GM12878 (cell line): ENCODE measurements at regions of chr1 and their contacts with region 1.

Region 1: DNA sequence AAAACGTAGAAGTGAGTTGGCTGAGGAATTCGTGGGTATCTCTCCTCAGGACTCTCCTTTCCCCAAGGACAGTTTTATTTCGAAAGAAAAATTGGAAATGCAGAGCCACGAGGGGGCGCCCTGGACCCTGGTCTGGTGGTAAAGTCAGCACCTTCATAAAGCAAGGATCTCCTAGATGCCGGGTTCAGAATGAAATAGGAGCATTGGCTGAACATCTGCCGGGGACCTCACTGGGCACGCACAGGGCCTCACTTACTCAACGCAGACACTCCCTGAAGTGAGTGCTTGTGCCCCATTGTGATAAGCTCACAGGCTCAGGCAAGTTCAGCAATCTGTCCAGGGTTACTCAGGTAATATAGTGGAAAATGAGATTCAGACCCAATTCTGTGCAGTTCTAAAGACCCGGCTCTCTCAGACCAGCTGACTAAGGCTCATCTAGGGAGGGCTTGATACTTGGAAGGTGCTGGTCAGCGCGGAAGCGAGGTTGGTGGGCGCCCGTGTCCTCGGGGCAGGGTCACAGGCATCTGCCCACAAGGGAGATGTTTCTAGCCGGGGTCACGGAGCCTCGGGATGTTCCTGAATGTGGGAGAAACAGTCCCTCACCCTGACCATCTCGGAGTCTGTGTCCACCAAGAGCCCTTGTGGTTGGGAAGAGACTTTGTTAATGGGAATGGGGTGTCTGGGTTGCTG is 55.7 kb upstream of the ETV3 start:
- DNase-seq: no peak
- ATAC-seq: peak; percentile 60
- H3K4me3 ChIP-seq: no peak overlapping the region
- H3K27ac ChIP-seq: no peak overlapping the region
- H3K4me1 ChIP-seq: peaks cover 8% of the 10 kb centered on the region; the same call in 1 of the 2 replicates
- H3K27me3 ChIP-seq: no peaks in the 10 kb centered on the region
- CTCF ChIP-seq: peak; percentile 68 to 76 (median 75)
- EP300 ChIP-seq: no peak
- POLR2A ChIP-seq: no peak
- RAD21 ChIP-seq: peak; percentile 65

Region 2: DNA sequence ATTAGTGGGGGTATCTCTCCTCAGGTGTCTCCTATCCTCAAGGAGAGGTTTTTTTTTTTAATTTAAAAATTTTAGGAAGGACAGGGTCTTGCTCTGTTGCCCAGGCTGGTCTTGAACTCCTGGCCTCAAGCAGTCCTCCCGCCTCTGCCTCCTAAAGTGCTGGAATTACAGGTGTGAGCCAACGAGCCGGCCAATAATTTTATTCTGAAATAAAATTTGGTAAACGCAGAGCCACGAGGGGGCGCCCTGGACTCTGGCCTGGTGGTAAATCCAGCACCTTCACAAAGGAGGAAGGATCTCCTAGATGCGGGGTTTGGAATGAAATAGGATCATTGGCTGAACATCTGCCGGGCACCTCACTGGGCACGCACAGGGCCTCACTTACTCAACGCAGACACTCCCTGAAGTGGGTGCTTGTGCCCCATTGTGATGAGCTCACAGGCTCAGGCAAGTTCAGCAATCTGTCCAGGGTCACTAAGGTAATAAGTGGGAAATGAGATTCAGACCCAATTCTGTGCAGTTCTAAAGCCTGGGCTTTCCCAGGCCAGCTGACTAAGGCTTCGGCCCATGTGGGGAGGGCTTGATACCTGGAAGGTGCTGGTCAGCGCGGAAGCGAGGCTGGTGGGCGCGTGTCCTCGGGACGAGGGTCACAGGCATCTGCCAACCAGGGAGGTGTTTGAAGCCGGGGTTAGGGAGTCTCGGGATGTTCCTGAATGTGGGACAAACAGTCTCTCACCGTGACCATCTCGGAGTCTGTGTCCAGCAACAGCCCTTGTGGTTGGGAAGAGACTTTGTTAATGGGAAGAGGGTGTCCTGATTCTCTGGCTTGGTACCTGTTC is 23.0 kb before region 1 on chr1:
- CTCF ChIA-PET with region 1: interaction called, 349 read pairs
- POLR2A ChIA-PET with region 1: no interaction called
- RAD21 ChIA-PET with region 1: interaction called, 23 read pairs
- SMC1A ChIA-PET with region 1: interaction called, 21 read pairs
- in situ Hi-C with region 1: no loop called
- intact Hi-C with region 1: loop called (anchors 1 kb)
- DNase-seq: no peak
- ATAC-seq: no peak; the same call in 2 of the 3 replicates
- H3K4me3 ChIP-seq: no peak overlapping the region
- H3K27ac ChIP-seq: no peak overlapping the region
- H3K4me1 ChIP-seq: peaks cover 43% of the 10 kb centered on the region
- H3K27me3 ChIP-seq: no peaks in the 10 kb centered on the region
- CTCF ChIP-seq: peak; percentile 49 to 67 (median 59)
- EP300 ChIP-seq: no peak
- POLR2A ChIP-seq: no peak
- RAD21 ChIP-seq: peak; percentile 35

Region 3: DNA sequence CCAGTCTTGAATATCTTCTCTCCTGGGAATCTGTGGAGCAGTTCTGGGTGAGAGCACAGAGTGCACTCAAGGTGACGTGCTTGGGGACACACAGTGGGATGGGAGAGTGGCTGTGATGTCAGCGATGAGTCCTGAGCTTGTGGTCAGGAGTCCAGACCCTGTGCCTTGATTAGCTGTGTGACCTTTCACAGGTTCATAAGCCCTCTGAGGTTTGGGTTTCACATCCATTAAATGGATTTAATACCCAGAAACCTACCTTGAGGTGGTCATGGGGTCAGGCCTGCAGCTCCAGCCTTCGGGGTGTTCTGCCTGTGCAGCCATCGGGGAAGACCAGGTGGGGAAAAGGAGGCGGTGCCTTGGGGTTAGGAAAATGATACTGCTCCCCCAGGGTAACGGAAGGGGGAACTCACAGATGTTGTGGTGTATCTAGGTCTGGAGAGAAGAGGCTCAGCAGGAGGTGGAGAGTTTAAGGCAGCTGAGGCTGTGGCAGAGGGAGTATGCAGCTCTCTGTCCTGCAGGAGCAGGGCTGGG is 17.2 kb before region 1 on chr1:
- CTCF ChIA-PET with region 1: interaction called, 349 read pairs
- POLR2A ChIA-PET with region 1: interaction called, 3 read pairs
- RAD21 ChIA-PET with region 1: interaction called, 23 read pairs
- SMC1A ChIA-PET with region 1: interaction called, 21 read pairs
- in situ Hi-C with region 1: no loop called
- intact Hi-C with region 1: loop called (anchors 1 kb)
- DNase-seq: peak; percentile 71
- ATAC-seq: peak; percentile 67
- H3K4me3 ChIP-seq: no peak overlapping the region
- H3K27ac ChIP-seq: peak overlapping the region; percentile 51
- H3K4me1 ChIP-seq: peaks cover 62% of the 10 kb centered on the region
- H3K27me3 ChIP-seq: no peaks in the 10 kb centered on the region
- CTCF ChIP-seq: no peak
- EP300 ChIP-seq: peak; percentile 14 to 43; a peak in 2 of 4 replicates
- POLR2A ChIP-seq: no peak
- RAD21 ChIP-seq: no peak

Region 4: GRCh38 chr1:157181790-157182189 is 12.1 kb before region 1 on chr1:
- CTCF ChIA-PET with region 1: interaction called, 349 read pairs
- POLR2A ChIA-PET with region 1: interaction called, 3 read pairs
- RAD21 ChIA-PET with region 1: interaction called, 7 read pairs
- SMC1A ChIA-PET with region 1: interaction called, 20 read pairs
- in situ Hi-C with region 1: no loop called
- intact Hi-C with region 1: no loop called
- DNase-seq: no peak
- ATAC-seq: peak; percentile 63
- H3K4me3 ChIP-seq: peak overlapping the region; percentile 5; the same call in 1 of the 2 replicates
- H3K27ac ChIP-seq: peak overlapping the region; percentile 66
- H3K4me1 ChIP-seq: peaks cover 45% of the 10 kb centered on the region
- H3K27me3 ChIP-seq: no peaks in the 10 kb centered on the region
- CTCF ChIP-seq: no peak
- EP300 ChIP-seq: no peak
- POLR2A ChIP-seq: no peak
- RAD21 ChIP-seq: no peak

Region 5: GRCh38 chr1:157312082-157312812 is 118.4 kb after region 1 on chr1:
- CTCF ChIA-PET with region 1: interaction called, 15 read pairs
- POLR2A ChIA-PET with region 1: no interaction called
- RAD21 ChIA-PET with region 1: interaction called, 7 read pairs
- SMC1A ChIA-PET with region 1: interaction called, 10 read pairs
- in situ Hi-C with region 1: no loop called
- intact Hi-C with region 1: loop called (anchors 5 kb)
- DNase-seq: no peak
- ATAC-seq: no peak
- H3K4me3 ChIP-seq: no peak overlapping the region
- H3K27ac ChIP-seq: no peak overlapping the region
- H3K4me1 ChIP-seq: peaks cover 12% of the 10 kb centered on the region
- H3K27me3 ChIP-seq: no peaks in the 10 kb centered on the region; a peak in 2 of 4 replicates
- CTCF ChIP-seq: no peak
- EP300 ChIP-seq: no peak
- POLR2A ChIP-seq: no peak
- RAD21 ChIP-seq: no peak

Region 6: GRCh38 chr1:157357111-157357510 is 163.3 kb after region 1 on chr1:
- CTCF ChIA-PET with region 1: interaction called, 15 read pairs
- POLR2A ChIA-PET with region 1: no interaction called
- RAD21 ChIA-PET with region 1: interaction called, 3 read pairs
- SMC1A ChIA-PET with region 1: interaction called, 6 read pairs
- in situ Hi-C with region 1: no loop called
- intact Hi-C with region 1: no loop called
- DNase-seq: no peak
- ATAC-seq: no peak
- H3K4me3 ChIP-seq: no peak overlapping the region
- H3K27ac ChIP-seq: no peak overlapping the region
- H3K4me1 ChIP-seq: no peaks in the 10 kb centered on the region
- H3K27me3 ChIP-seq: no peaks in the 10 kb centered on the region
- CTCF ChIP-seq: no peak
- EP300 ChIP-seq: no peak
- POLR2A ChIP-seq: no peak
- RAD21 ChIP-seq: no peak

Region 7: DNA sequence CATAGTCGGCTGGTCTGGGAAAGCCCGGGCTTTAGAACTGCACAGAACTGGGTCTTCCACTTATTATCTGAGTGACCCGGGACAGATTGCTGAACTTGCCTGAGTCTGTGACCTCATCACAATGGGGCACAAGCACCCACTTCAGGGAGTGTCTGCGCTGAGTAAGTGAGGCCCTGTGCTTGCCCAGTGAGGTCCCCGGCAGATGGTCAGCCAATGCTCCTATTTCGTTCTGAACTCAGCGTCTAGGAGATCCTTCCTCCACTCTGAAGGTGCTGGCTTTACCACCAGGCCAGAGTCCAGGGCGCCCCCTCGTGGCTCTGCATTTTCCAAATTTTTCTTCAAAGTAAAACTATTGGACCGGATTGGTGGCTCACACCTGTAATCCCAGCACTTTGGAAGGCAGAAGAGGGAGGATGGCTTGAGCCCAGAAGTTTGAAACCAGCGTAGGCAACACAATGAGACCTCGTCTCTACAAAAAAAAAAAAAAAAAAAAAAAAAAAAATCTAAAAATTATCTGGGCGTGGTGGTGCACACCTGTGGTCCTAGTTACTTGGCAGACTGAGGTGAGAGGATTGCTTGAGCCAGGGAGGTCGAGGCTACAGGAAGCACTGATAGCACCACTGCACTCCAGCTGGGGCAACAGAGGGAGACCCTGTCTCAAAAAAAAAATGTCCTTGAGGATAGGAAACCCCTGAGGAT is 296.8 kb after region 1 on chr1:
- CTCF ChIA-PET with region 1: interaction called, 24 read pairs
- POLR2A ChIA-PET with region 1: no interaction called
- RAD21 ChIA-PET with region 1: interaction called, 7 read pairs
- SMC1A ChIA-PET with region 1: interaction called, 23 read pairs
- in situ Hi-C with region 1: loop called (anchors 5 kb)
- intact Hi-C with region 1: loop called (anchors 2 kb)
- DNase-seq: no peak
- ATAC-seq: peak; percentile 77
- H3K4me3 ChIP-seq: no peak overlapping the region
- H3K27ac ChIP-seq: no peak overlapping the region
- H3K4me1 ChIP-seq: no peaks in the 10 kb centered on the region
- H3K27me3 ChIP-seq: 0 out of 4 replicates have a peak, but pooled peaks cover 0 to 2% of the 10 kb centered on the region in 2 experiments
- CTCF ChIP-seq: peak; percentile 67 to 73 (median 70)
- EP300 ChIP-seq: no peak
- POLR2A ChIP-seq: no peak
- RAD21 ChIP-seq: peak; percentile 67